AG04450 (cell line): ENCODE measurements at regions of chr12 and their contacts with region 1.

Region 1: GRCh38 chr12:10749700-10750384 is 26.7 kb upstream of the YBX3 start:
- DNase-seq: peak; percentile 86
- H3K4me3 ChIP-seq: peak overlapping the region; percentile 50
- H3K27ac ChIP-seq: no peak overlapping the region
- H3K27me3 ChIP-seq: no peaks in the 10 kb centered on the region
- CTCF ChIP-seq: peak; percentile 96

Region 2: DNA sequence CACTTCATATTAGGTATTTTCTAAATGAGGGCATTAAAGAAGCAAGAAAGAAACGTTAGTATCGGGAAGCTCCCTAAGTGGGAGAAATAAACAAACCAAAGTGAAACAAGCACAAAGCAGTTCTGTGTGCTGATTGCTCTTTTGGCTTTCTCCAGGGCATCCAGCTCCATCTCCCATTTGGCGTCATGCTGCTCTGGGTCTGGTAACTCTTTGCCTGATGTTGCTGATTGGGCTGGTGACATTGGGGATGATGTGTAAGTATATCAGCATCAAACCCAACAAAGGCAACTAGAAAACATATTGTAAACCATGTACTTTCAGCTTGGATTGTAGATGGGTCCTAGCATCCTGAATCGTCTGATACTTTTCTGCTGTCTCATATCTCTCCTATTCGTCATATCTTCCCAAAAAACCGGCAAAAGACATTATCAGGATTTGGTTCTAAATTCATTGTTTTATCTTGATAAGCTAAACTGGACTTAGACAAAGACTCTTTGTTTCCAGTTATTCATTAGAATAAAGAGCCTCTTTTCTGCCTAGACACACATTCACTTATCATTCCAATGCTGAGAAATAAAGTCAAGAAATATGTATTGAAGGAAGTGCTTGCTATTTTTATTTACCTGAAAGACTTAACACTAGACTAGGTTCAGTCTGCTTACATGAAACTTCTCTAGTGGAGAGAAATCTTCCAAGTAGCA is 737.1 kb before region 1 on chr12:
- CTCF ChIA-PET with region 1: interaction called, 10 read pairs
- POLR2A ChIA-PET with region 1: no interaction called
- DNase-seq: no peak
- H3K4me3 ChIP-seq: no peak overlapping the region
- H3K27ac ChIP-seq: no peak overlapping the region
- H3K27me3 ChIP-seq: no peaks in the 10 kb centered on the region
- CTCF ChIP-seq: no peak

Region 3: GRCh38 chr12:10310926-10311720 is 438.7 kb before region 1 on chr12:
- CTCF ChIA-PET with region 1: interaction called, 10 read pairs
- POLR2A ChIA-PET with region 1: no interaction called
- DNase-seq: no peak
- H3K4me3 ChIP-seq: no peak overlapping the region
- H3K27ac ChIP-seq: no peak overlapping the region
- H3K27me3 ChIP-seq: peaks cover 2% of the 10 kb centered on the region
- CTCF ChIP-seq: no peak

Region 4: DNA sequence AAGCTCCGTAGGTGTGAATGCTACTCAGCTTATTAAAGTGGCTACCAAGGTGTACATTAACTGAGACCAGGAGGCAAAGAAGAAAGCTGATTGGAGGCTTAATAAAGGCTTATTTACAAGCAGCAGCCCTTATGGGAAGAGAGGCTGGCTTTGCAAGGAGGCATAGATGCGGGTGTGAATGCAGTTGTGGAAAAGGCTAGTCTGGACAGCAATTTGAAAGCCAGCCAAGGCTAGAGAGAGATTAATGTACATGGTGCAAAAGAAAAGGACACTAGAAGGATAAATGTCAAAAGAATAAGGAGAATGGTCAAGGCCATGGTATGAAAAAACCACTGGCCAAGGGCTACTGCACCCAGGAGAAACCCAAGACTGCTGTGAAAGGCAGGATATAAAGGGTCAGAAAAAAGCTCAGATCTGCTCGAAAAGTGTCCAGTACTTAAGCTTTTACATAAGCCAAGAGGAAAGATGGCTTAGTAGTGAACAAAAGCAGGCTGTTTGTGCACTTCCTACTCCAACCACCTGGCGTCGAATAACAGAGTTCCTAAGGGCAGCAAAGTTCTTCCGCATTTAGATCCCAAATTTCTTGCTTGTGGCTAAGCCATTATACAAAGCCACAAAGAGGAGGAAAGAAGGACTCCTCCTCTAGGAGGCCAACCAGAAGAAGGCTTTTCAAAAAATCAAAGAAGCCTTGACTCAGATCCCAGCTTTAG is 384.0 kb before region 1 on chr12:
- CTCF ChIA-PET with region 1: interaction called, 11 read pairs
- POLR2A ChIA-PET with region 1: no interaction called
- DNase-seq: no peak
- H3K4me3 ChIP-seq: peak overlapping the region; percentile 72
- H3K27ac ChIP-seq: peak overlapping the region; percentile 80
- H3K27me3 ChIP-seq: no peaks in the 10 kb centered on the region
- CTCF ChIP-seq: peak; percentile 24

Region 5: DNA sequence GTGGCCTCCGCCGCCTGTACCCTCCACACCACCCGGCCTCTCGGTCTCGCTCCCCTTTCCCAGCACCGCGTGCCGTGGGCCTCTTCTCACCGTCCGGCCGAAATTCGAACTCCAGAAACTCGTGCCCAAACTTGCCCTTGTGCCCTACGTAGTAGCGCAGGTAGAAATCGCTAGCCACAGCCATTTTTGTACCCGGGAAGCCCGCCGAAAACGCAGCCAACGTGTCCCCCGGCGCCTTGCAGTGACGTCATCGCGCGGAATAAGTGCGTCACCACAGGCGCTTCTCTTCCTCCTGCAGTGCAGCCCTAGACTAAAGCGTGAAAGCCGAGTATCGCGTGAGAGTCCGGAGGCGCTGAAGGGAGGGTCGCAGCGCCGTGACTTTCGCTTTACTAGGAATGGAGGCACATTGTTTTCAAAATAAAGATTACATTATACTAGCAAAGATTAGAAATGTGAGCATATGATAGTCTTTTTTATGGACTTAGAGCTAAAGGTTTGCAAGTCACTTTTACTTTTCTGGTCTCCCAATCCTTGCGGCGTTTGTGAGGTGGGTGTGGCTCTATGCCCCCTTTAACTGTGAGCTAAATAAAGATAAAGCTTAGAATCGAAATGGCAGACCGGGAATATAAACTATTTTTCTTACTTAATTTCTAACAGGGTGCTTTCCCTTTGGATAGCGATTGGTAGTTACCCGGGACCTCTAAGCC is 136.3 kb before region 1 on chr12 and contains the start of gene MAGOHB:
- CTCF ChIA-PET with region 1: interaction called, 24 read pairs
- POLR2A ChIA-PET with region 1: no interaction called
- DNase-seq: peak; percentile 92
- H3K4me3 ChIP-seq: peak within 1 kb of the TSS; percentile 95
- H3K27ac ChIP-seq: peak within 1 kb of the TSS; percentile 84
- H3K27me3 ChIP-seq: no peaks in the 10 kb centered on the region
- CTCF ChIP-seq: no peak
- polyA plus RNA-seq, gene MAGOHB: 22.5 and 42.9 TPM in 2 replicates

Region 6: DNA sequence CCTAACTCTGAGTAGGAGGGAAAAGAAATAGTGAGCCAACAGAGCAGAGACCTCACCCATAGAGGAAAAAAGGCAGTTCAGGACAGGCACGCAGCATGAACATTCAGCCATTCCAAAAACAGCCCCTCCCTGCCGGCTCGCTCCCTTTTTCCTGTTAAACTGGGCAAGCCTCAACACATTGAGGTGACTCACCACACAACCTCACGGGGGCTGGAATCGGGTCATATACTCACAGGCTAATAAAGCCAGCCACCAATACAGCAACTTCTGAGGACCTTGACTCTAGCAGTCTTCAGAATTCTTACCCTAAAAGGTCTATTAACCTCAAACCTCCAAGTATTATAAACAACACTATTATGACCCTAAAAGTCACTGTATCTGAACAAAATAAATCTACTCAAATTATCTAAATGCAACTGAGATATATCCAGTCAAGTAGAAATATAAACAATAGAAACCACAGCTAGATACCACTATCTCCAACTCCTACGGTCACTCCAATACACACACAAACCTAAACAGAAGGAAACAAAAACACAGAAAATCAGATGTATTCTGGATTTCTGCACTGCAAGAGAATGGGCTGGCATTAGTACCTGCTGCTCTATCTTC is 33.0 kb before region 1 on chr12:
- CTCF ChIA-PET with region 1: interaction called, 36 read pairs
- POLR2A ChIA-PET with region 1: interaction called, 3 read pairs
- DNase-seq: peak; percentile 62
- H3K4me3 ChIP-seq: peak overlapping the region; percentile 45
- H3K27ac ChIP-seq: peak overlapping the region; percentile 53
- H3K27me3 ChIP-seq: no peaks in the 10 kb centered on the region
- CTCF ChIP-seq: no peak

Region 7: DNA sequence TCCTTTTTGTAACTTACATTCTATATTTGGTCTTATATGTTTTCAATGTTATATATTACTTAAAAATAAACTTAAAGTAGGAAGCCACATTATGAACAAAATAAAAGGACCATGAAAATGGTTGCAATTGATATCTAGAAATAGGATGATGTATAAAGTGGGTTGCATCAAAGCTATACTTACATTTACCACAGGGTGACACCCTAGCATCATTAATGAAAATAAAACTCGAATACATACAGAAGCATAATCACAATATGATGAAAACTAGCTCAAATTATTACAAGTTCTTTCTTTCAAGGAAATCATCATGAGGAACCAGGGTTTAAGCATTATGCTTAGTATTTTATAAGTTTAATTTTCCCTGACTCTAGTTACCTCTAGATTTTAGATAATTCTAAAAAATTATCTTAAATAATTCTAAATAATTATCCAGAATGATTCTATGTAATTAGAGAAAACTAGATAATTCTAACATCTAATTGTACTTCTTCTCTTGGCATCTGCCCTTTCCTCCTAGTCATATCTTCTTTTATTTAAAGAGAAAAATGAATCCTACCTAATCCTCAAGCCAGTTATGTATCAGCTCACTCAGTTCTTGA is 21.4 kb after region 1 on chr12:
- CTCF ChIA-PET with region 1: interaction called, 28 read pairs
- POLR2A ChIA-PET with region 1: no interaction called
- DNase-seq: peak; percentile 18
- H3K4me3 ChIP-seq: no peak overlapping the region
- H3K27ac ChIP-seq: no peak overlapping the region
- H3K27me3 ChIP-seq: peaks cover 6% of the 10 kb centered on the region
- CTCF ChIP-seq: peak; percentile 65

Region 8: DNA sequence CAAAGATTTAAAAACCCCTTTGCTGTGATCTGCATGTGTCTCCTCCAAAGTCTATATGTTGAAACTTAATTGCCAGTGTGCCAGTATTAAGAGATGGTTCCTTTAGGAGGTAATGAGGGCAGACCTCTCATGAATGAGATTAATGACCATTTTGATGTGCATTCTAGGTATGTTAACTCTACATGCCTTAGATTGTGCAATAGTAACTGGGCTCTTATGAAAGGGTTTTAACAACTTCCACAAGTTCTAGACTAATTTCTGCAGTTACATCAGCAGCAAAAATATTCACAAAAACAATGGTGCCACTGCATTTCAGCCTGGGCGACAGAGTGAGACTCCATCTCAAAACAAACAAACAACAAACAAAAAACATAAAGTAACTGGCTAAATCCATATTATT is 80.2 kb after region 1 on chr12:
- CTCF ChIA-PET with region 1: no interaction called
- POLR2A ChIA-PET with region 1: no interaction called
- DNase-seq: no peak
- H3K4me3 ChIP-seq: no peak overlapping the region
- H3K27ac ChIP-seq: no peak overlapping the region
- H3K27me3 ChIP-seq: no peaks in the 10 kb centered on the region
- CTCF ChIP-seq: no peak

Region 9: GRCh38 chr12:10891937-10892336 is 142.1 kb after region 1 on chr12:
- CTCF ChIA-PET with region 1: no interaction called
- POLR2A ChIA-PET with region 1: no interaction called
- DNase-seq: no peak
- H3K4me3 ChIP-seq: no peak overlapping the region
- H3K27ac ChIP-seq: no peak overlapping the region
- H3K27me3 ChIP-seq: no peaks in the 10 kb centered on the region
- CTCF ChIP-seq: no peak

Region 10: DNA sequence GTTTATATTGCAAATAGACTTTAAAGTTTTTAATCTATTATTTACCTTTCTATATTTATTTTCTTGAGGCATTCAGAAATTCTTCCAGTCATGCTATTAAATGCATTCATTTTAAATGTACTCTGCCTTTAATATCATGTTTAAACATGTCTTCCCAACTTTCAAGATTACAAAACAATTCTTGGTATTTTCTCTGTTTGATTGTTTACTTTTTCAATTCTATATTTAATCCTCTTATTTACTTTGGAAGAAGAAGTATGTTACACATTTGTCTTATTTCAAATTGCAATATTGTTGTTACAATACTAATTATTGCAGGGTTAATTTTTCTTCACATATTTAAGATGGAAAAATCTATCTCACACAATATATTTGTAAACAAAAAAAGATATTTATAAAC is 169.0 kb after region 1 on chr12:
- CTCF ChIA-PET with region 1: no interaction called
- POLR2A ChIA-PET with region 1: no interaction called
- DNase-seq: no peak
- H3K4me3 ChIP-seq: no peak overlapping the region
- H3K27ac ChIP-seq: no peak overlapping the region
- H3K27me3 ChIP-seq: no peaks in the 10 kb centered on the region
- CTCF ChIP-seq: no peak